PC-3 (cell line): ENCODE measurements at regions of chr9 and their contacts with region 1.

Region 1: DNA sequence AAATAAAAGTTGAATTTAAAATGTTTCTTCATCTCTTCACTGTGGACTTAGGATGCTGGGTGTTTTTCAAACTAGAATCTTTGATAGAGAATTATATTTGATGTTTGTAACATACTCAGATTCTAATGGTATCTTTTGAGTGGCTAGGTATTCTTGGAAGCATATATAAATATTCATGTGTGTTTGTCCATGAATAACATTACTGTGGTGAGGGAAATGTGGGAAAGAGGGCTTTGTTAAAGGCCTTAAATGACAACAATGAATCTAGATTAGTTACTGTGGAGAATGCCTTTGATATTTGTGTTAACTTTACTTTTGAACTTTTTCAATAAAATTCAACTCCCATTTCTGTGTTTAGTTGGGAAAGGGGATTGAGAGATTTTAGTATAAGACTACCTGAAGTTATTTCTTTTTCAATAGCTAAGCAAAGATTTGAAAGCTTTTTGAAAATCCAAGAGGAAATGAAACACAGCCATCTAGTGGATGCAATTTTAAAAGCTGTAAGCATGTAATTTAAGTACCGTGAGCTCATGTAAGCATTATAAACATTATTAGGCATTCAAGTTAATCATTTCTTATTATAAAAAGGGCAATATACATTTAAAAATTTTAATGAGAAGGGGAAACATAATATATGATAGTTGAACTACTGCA is 69.6 kb downstream of the CCDC171 start:
- DNase-seq: peak; percentile 43
- ATAC-seq: 0 out of 2 replicates have a peak, but pooled peaks have one; percentile 31
- H3K4me3 ChIP-seq: no peak overlapping the region
- H3K27ac ChIP-seq: no peak overlapping the region
- H3K4me1 ChIP-seq: no peaks in the 10 kb centered on the region
- H3K27me3 ChIP-seq: no peaks in the 10 kb centered on the region
- CTCF ChIP-seq: peak; percentile 61

Region 2: GRCh38 chr9:15271403-15271802 is 351.0 kb before region 1 on chr9:
- CTCF ChIA-PET with region 1: no interaction called
- POLR2A ChIA-PET with region 1: no interaction called
- intact Hi-C with region 1: no loop called
- DNase-seq: no peak
- ATAC-seq: no peak
- H3K4me3 ChIP-seq: no peak overlapping the region
- H3K27ac ChIP-seq: no peak overlapping the region
- H3K4me1 ChIP-seq: no peaks in the 10 kb centered on the region
- H3K27me3 ChIP-seq: no peaks in the 10 kb centered on the region
- CTCF ChIP-seq: no peak

Region 3: GRCh38 chr9:15469406-15469805 is 153.0 kb before region 1 on chr9:
- CTCF ChIA-PET with region 1: interaction called, 15 read pairs
- POLR2A ChIA-PET with region 1: no interaction called
- intact Hi-C with region 1: no loop called
- DNase-seq: no peak
- ATAC-seq: no peak
- H3K4me3 ChIP-seq: no peak overlapping the region
- H3K27ac ChIP-seq: no peak overlapping the region
- H3K4me1 ChIP-seq: no peaks in the 10 kb centered on the region
- H3K27me3 ChIP-seq: no peaks in the 10 kb centered on the region
- CTCF ChIP-seq: no peak

Region 4: DNA sequence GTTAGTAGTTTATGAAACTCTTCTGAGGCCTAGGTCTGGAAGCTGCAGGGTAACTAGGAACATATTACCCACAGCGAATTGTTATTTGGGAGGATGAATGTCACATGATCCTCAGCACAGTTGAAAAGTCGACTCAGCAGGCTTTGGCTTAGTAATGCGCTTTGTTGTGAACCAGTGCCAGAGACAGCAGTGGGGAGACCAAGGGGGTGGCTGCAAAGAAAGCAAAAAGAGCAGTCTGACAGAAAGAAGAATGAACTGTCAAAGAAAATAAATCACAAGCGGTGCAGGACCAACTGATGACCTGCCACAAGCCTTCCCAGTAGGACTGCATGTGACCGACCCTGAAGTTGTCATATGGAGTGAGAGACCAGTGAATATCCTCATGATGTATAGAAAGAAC is 100.4 kb after region 1 on chr9:
- CTCF ChIA-PET with region 1: no interaction called
- POLR2A ChIA-PET with region 1: no interaction called
- intact Hi-C with region 1: no loop called
- DNase-seq: no peak
- ATAC-seq: no peak
- H3K4me3 ChIP-seq: no peak overlapping the region
- H3K27ac ChIP-seq: no peak overlapping the region
- H3K4me1 ChIP-seq: no peaks in the 10 kb centered on the region
- H3K27me3 ChIP-seq: no peaks in the 10 kb centered on the region
- CTCF ChIP-seq: no peak